HAP-1 (cell line): ENCODE measurements at regions of chr6 and their contacts with region 1.

Region 1: GRCh38 chr6:54717849-54718455 is 128.6 kb upstream of the FAM83B start:
- DNase-seq: peak; percentile 64 to 85
- H3K4me3 ChIP-seq: no peak overlapping the region
- H3K4me1 ChIP-seq: peaks cover 18% of the 10 kb centered on the region
- H3K27me3 ChIP-seq: no peaks in the 10 kb centered on the region

Region 2: GRCh38 chr6:55069132-55069781 is 351.3 kb after region 1 on chr6:
- in situ Hi-C with region 1: loop called (anchors 25 kb)
- DNase-seq: peak; percentile 39 to 61
- H3K4me3 ChIP-seq: no peak overlapping the region
- H3K4me1 ChIP-seq: no peaks in the 10 kb centered on the region
- H3K27me3 ChIP-seq: no peaks in the 10 kb centered on the region

Region 3: GRCh38 chr6:55239099-55239498 is 521.1 kb after region 1 on chr6:
- in situ Hi-C with region 1: loop called (anchors 25 kb)
- DNase-seq: no peak
- H3K4me3 ChIP-seq: no peak overlapping the region
- H3K4me1 ChIP-seq: no peaks in the 10 kb centered on the region
- H3K27me3 ChIP-seq: no peaks in the 10 kb centered on the region